Heart right ventricle (tissue), 16 donors: ENCODE measurements at regions of chr4 and their contacts with region 1.

Region 1: DNA sequence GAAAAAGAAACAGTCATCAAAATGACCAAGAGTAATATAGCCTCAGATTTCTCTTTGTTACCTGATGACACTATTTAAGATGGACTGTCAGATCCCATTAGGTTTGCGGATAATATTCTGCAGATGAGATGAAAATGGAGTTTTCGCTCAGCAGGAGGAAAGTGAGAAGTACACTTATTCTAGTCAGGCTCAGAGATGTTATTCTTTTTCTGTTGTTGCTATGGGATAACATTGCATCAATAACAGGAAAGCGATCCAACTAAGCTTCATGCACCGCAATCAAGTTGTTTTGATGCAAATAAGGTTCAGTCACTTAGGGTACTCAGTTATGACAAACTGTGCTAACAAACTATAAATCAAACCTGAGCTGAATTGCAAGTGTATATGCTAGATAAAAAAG is 415.0 kb downstream of the CCSER1 start:
- DNase-seq: no peak
- ATAC-seq: no peak
- H3K4me3 ChIP-seq: no peak overlapping the region
- H3K27ac ChIP-seq: no peak overlapping the region
- H3K4me1 ChIP-seq: peaks cover 0 to 12% (median 0%) of the 10 kb centered on the region in 9 donors
- H3K27me3 ChIP-seq: no peaks in the 10 kb centered on the region
- CTCF ChIP-seq: no peak

Region 2: GRCh38 chr4:90695411-90695810 is 153.2 kb after region 1 on chr4:
- intact Hi-C with region 1: loop called in 1 of 10 experiments (anchors 5 kb)
- DNase-seq: no peak
- ATAC-seq: no peak
- H3K4me3 ChIP-seq: no peak overlapping the region
- H3K27ac ChIP-seq: no peak overlapping the region
- H3K4me1 ChIP-seq: no peaks in the 10 kb centered on the region
- H3K27me3 ChIP-seq: no peaks in the 10 kb centered on the region
- CTCF ChIP-seq: no peak